T-cell (primary cell): ENCODE measurements at regions of chr4 and their contacts with region 1.

Region 1: GRCh38 chr4:11218692-11219091 is 210.0 kb downstream of the HS3ST1 start:
- DNase-seq: no peak
- ATAC-seq: no peak
- H3K4me3 ChIP-seq: no peak overlapping the region
- H3K4me3 Mint-ChIP-seq: no peak overlapping the region
- H3K27ac ChIP-seq: no peak overlapping the region
- H3K27ac Mint-ChIP-seq: no peak overlapping the region
- H3K4me1 ChIP-seq: no peaks in the 10 kb centered on the region
- H3K4me1 Mint-ChIP-seq: peaks cover 0 to 5% (median 0%) of the 10 kb centered on the region in 3 donors
- H3K27me3 ChIP-seq: peaks cover 0 to 3% of the 10 kb centered on the region in 2 experiments
- H3K27me3 Mint-ChIP-seq: no peaks in the 10 kb centered on the region

Region 2: GRCh38 chr4:11263208-11263607 is 44.5 kb after region 1 on chr4:
- CTCF ChIA-PET with region 1: no interaction called
- POLR2A ChIA-PET with region 1: interaction called in 1 of 2 experiments, 12 read pairs
- DNase-seq: no peak
- ATAC-seq: no peak
- H3K4me3 ChIP-seq: no peak overlapping the region
- H3K4me3 Mint-ChIP-seq: no peak overlapping the region
- H3K27ac ChIP-seq: no peak overlapping the region
- H3K27ac Mint-ChIP-seq: no peak overlapping the region
- H3K4me1 ChIP-seq: peaks cover 0 to 2% of the 10 kb centered on the region in 2 experiments
- H3K4me1 Mint-ChIP-seq: no peaks in the 10 kb centered on the region
- H3K27me3 ChIP-seq: no peaks in the 10 kb centered on the region
- H3K27me3 Mint-ChIP-seq: no peaks in the 10 kb centered on the region

Region 3: DNA sequence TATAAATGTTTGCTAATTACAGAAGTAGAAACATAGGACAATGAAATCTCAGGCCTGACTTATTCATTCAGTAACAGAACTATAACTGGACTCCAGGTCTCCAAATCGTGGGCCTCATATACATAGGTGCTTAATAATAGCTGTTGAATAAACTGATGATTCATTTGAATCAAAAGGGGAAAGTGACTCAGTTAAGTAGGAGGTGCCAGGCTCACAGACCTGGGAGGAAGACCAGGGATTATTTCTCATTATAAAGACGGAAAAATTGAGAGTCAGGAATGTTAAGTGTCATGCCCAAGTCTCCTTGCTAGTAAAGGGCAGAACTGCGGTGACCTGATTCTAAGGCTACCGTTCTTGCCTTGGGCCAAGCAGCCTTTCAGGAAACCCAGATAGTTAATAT is 78.5 kb after region 1 on chr4:
- CTCF ChIA-PET with region 1: no interaction called
- POLR2A ChIA-PET with region 1: no interaction called
- DNase-seq: no peak
- ATAC-seq: no peak
- H3K4me3 ChIP-seq: no peak overlapping the region
- H3K4me3 Mint-ChIP-seq: no peak overlapping the region
- H3K27ac ChIP-seq: no peak overlapping the region
- H3K27ac Mint-ChIP-seq: no peak overlapping the region
- H3K4me1 ChIP-seq: no peaks in the 10 kb centered on the region
- H3K4me1 Mint-ChIP-seq: peaks cover 0 to 2% (median 0%) of the 10 kb centered on the region in 3 donors
- H3K27me3 ChIP-seq: no peaks in the 10 kb centered on the region
- H3K27me3 Mint-ChIP-seq: peaks cover 0 to 3% of the 10 kb centered on the region in 2 donors